AG04449 (cell line): ENCODE measurements at regions of chr5 and their contacts with region 1.

Region 1: DNA sequence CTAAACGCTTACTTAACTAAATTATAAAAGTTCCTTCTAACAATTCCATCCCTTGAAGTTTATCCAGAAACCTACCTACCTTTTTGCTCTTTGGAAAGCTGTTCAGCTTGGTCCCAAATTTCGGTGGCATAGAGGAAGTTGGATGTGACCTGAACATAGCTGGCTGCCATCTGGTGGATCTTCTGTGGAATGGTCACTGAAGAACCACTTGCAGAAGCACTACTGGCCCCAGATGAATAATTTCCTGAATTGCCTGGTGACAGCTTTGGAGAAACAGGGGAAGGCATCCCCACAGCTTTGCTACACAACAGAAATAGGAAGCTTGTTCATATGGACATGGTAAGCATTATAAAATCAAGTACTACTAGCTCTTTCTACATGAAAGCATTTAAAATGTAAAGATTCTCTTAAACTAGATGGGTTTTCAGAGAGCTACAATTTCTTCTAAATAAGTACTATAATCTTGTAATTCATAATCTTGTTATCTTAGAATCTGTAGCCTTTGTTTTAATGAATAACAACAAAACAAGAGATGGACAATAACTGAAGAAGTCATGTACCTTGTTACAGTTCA is 9.9 kb downstream of the LEAP2 start:
- DNase-seq: no peak
- H3K4me3 ChIP-seq: no peak overlapping the region
- CTCF ChIP-seq: peak; percentile 71

Region 2: GRCh38 chr5:132225165-132226032 is 657.9 kb before region 1 on chr5:
- CTCF ChIA-PET with region 1: no interaction called
- POLR2A ChIA-PET with region 1: no interaction called
- DNase-seq: peak; percentile 57
- H3K4me3 ChIP-seq: peak overlapping the region; percentile 31
- CTCF ChIP-seq: no peak

Region 3: GRCh38 chr5:132895719-132896305 is 12.5 kb after region 1 on chr5:
- CTCF ChIA-PET with region 1: interaction called, 18 read pairs
- POLR2A ChIA-PET with region 1: no interaction called
- DNase-seq: no peak
- H3K4me3 ChIP-seq: no peak overlapping the region
- CTCF ChIP-seq: no peak

Region 4: DNA sequence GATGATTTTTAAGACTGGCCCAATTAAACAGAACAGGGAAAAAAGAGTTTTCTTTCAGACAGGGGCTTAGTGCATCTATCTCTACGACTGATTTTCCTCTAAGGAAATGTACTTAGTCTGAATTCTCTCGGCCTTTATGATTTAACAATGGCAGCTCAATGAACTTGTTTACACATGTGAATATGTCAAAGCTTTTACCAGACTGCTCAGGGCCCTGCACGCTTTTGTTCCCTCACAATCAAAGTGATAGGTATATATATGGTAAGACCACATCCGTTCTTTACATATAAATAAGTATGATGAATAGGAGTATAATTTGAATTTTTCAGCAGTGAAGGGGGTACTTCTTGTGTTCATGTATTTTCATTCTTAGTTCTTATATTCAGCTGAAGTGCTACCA is 17.7 kb after region 1 on chr5:
- CTCF ChIA-PET with region 1: interaction called, 18 read pairs
- POLR2A ChIA-PET with region 1: no interaction called
- DNase-seq: no peak
- H3K4me3 ChIP-seq: no peak overlapping the region
- CTCF ChIP-seq: no peak